ENCODE measurements at regions of chr18 and their contacts with region 1.

Region 1: DNA sequence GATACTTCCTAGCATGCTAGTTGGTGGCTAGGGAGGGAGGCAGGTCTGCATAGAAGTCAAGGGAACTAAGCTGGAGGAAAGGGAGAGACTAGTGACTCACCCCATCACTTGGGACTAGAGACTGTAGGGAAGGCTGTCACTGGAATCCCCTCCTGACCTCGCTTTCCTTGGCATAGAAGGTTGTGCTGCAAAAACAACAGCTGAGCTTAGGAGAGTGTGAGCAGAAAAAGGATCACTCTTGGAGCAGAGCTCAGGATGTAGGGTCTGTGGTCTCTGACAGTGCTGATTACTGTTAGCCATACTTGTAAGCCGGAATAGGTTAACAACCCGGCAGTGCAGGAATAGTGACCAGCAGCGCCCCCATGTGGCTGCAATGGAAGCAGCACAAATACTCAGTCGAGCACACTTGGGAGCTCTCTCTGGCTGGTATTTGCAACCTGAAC is 66.9 kb upstream of the SMAD2 start:
- H3K4me3 ChIP-seq: no peak overlapping the region
- H3K27ac ChIP-seq: no peak overlapping the region
- H3K4me1 ChIP-seq: no peaks in the 10 kb centered on the region
- CTCF ChIP-seq: no peak; the same call in 1 of the 2 replicates

Region 2: DNA sequence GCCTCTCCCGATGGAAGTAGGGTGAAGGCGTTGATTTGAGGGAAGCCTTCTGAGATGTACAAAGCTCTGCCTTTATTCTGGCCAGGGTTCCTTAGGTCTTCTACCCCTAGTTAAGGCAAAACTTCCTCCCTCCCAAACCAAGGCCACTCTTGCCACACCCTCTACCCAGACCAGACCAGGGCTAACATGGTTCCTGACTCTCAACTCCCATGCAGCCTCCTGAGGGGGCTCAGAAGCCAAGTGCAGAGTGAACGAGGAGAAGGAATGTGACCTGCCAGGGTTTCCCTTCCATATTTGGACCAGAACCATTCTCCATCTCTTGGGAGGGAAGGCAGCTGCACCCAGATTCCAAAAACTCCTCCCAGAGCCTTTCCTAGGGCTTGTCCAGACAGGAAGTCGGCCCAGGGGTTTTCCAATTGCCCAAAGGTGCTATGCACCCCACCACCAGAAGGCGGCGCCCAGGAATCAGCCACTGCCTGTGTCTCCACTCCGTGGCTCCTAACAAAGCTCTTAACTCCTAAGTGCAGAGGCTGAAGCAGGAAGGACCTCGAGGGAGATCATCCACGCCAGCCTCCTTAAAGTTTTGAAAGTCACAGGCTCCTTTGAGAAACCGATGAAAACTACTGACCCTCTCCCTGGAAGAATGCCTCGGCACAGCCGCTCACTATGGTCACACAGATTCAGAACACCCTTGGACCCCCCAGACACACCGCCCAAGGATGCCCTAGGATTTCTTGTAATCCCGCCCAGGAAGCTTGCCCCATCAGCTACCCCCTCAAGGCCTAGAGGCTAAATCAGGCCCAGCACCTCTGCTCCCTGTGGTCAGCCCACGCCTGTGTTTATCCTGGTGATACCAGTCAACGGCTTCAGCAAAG is 224.7 kb before region 1 on chr18:
- CTCF ChIA-PET with region 1: interaction called, 37 read pairs
- POLR2A ChIA-PET with region 1: no interaction called
- H3K4me3 ChIP-seq: no peak overlapping the region
- H3K27ac ChIP-seq: no peak overlapping the region
- H3K4me1 ChIP-seq: no peaks in the 10 kb centered on the region
- CTCF ChIP-seq: peak; percentile 52; the same call in 1 of the 2 replicates

Region 3: DNA sequence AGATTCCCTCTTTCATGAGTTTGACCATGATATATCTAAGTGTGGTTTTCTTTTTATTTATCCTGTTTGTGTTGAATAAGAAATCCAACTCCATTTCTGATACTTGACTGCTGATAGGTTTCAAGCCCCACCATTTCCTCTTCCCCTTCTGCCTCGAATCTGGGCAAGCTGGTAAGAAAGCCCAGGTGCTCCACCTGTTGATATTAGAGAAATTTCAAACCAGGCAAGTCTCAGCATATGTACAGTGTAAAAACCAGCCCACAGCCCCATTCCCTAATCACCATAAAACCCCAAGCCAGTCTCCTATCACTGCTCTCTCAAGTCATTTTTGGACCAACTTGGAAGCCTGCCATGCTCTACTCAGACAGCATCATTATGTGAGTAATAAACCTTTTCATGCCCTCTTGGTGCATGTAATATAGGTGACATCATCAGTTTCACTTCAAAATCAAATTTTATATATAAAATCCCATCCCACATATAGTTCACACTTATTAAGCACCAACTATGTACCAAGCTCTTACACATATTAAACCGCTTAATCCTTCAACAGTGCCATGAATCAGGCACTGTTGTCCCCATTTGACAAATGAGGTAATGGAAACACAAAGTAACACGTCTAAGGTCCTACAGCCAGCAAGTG is 113.5 kb before region 1 on chr18:
- CTCF ChIA-PET with region 1: interaction called, 13 read pairs
- POLR2A ChIA-PET with region 1: no interaction called
- H3K4me3 ChIP-seq: no peak overlapping the region
- H3K27ac ChIP-seq: 0 out of 2 replicates have a peak overlapping the region, but pooled peaks have one; percentile 11
- H3K4me1 ChIP-seq: peaks cover 18% of the 10 kb centered on the region
- CTCF ChIP-seq: peak; percentile 43; the same call in 1 of the 2 replicates

Region 4: GRCh38 chr18:47912343-47912742 is 85.0 kb before region 1 on chr18:
- CTCF ChIA-PET with region 1: no interaction called
- POLR2A ChIA-PET with region 1: no interaction called
- H3K4me3 ChIP-seq: no peak overlapping the region
- H3K27ac ChIP-seq: no peak overlapping the region
- H3K4me1 ChIP-seq: peaks cover 26% of the 10 kb centered on the region
- CTCF ChIP-seq: no peak

Region 5: DNA sequence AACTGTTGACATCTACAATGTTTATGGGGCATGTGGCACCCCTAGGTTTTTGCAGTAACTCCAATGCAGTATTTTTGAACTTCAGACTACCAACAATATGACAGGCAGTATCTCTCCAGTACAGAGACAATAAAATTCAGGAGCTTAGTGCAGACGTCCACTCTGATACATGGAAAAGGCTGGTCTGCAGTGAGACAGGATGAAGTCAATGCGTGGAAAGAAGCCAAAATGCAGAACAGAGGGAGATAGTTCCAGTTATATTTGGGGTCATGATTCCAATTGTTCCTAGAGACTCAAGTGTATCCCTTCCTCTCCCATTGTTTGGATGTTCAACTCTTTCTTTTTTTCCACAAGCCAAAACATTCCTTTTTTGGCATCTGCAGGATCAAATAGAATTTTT is 48.2 kb before region 1 on chr18:
- CTCF ChIA-PET with region 1: interaction called, 13 read pairs
- POLR2A ChIA-PET with region 1: no interaction called
- H3K4me3 ChIP-seq: no peak overlapping the region
- H3K27ac ChIP-seq: no peak overlapping the region
- H3K4me1 ChIP-seq: 0 out of 2 replicates have a peak, but pooled peaks cover 3% of the 10 kb centered on the region
- CTCF ChIP-seq: no peak

Region 6: GRCh38 chr18:47975105-47975504 is 22.3 kb before region 1 on chr18:
- CTCF ChIA-PET with region 1: interaction called, 12 read pairs
- POLR2A ChIA-PET with region 1: no interaction called
- H3K4me3 ChIP-seq: no peak overlapping the region
- H3K27ac ChIP-seq: no peak overlapping the region
- H3K4me1 ChIP-seq: no peaks in the 10 kb centered on the region
- CTCF ChIP-seq: no peak

Region 7: DNA sequence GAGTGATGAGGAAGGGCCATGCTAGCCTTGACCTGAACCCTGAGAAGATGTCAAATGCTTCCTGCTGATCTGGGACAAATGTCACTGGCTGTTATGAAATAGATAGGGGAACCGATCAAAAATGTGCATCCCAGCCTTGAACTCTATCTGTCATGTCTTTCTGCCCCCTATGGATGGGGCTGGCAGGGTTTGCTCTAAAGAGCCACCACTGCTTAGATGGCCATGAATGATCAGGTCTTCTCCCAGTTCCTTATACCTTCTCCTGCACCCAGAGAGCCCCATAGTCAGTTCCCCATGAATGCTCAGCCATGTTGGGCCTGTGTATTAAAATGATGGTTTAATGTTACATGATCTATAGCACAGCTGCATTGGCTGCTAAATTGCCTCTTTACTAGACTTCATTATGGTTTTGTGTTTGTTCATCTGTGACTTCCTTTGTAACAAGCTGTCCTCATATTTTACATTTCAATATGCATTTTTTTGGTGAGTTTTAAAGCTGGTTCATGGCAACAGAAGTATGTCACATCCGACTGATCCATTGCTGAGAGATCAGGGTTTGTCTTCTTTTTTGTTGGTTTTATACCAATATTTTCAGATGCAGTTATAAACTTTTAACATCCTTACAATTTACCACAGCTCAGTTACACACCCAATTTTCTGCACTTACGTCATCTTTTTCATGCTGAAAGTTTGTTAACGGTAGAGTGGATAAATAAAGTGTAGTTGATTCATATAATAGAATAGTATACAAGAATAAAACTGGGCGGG is 10.6 kb before region 1 on chr18:
- CTCF ChIA-PET with region 1: interaction called, 18 read pairs
- POLR2A ChIA-PET with region 1: interaction called, 3 read pairs
- H3K4me3 ChIP-seq: no peak overlapping the region
- H3K27ac ChIP-seq: no peak overlapping the region
- H3K4me1 ChIP-seq: no peaks in the 10 kb centered on the region
- CTCF ChIP-seq: no peak

Region 8: GRCh38 chr18:48007955-48008701 is 10.8 kb after region 1 on chr18:
- CTCF ChIA-PET with region 1: interaction called, 36 read pairs
- POLR2A ChIA-PET with region 1: interaction called, 3 read pairs
- H3K4me3 ChIP-seq: peak overlapping the region; percentile 45
- H3K27ac ChIP-seq: peak overlapping the region; percentile 22; the same call in 1 of the 2 replicates
- H3K4me1 ChIP-seq: peaks cover 2% of the 10 kb centered on the region; the same call in 1 of the 2 replicates
- CTCF ChIP-seq: peak; percentile 37; the same call in 1 of the 2 replicates